PC-9 (cell line): ENCODE measurements at regions of chr22 and their contacts with region 1.

Region 1: DNA sequence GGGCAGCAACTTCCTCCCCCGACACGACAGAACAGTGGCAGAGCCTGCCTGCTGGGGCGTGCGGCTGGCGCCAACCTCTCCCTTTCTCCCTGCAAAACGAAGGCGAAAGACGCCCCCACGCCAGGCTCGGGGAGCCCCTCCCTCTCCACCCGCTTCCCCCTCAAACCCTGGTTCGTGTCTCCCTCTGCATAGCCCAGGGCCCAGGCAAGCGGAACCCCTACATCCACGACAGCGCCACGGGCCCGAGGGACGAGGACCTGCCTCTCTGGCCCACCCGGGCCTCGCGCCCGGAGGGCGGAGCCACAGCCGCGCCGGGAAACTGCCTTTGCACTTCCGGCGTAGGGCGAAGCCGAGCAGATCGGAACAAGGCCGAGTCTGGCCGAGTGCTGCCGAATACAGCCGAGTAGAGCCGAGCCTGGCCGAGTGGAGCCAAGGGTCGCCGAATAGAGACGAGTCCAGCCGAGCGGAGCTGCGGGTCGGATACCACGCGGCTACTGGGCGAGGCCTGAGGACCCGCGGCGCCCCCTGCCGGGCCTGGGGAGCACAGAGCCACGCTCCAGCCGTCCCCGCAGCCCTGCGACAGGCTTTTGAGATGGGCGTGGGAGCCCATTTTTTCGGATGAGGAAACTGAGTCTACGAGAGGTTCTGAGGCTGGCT is 11.2 kb upstream of the C1QTNF6 start:
- DNase-seq: peak; percentile 95 to 100
- H3K4me3 ChIP-seq: peak overlapping the region; percentile 77
- H3K27ac ChIP-seq: peak overlapping the region; percentile 94
- H3K4me1 ChIP-seq: peaks cover 46% of the 10 kb centered on the region
- H3K27me3 ChIP-seq: no peaks in the 10 kb centered on the region
- CTCF ChIP-seq: peak; percentile 91

Region 2: DNA sequence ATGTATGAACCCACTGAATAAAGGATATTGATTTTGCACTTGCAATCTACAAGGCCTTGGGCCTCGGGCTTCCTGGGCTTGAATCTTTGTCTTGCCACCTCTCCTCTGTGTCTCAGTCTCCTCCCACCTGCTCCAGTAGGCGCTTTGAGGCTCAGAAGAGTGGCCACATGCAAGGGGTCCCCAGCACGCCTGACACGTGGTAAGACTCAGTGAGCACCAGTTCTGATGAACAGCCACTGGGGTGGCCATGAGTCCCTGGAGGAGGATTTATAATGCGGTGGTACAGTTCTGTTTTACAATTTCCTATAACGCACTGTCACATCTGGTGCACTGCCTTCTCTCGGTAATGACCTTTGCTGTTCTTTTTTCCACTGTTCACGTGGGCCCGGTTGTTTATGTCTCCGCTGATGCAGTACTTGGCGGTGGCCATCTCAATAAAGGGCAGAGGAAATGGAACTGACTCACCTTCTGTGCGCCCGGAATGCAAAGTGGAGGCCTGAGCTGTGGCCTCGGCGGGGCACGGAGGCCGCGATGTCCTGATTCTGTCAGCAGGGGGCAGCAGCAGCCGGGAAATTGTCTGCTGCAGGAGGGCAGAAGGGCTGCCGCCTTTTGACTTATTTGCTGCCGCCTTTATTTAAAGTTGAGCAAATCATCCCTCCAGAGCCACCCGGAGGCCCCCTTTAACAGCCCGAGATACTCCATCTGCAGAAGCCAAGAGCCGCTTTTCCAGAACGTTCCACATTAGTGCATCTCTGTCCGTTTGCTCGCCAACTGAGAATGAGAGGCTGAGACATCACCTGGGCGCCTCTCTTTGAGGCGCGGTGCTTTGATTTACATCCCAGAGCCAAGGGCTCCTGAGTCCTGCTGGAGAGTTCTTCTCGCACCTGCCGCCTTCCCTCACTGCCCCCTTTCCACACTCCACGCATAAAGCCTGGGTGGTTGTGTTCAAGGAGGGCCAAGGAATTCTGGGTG is 417.3 kb before region 1 on chr22:
- CTCF ChIA-PET with region 1: no interaction called
- POLR2A ChIA-PET with region 1: no interaction called
- intact Hi-C with region 1: loop called (anchors 1 kb)
- DNase-seq: peak; percentile 80 to 93
- H3K4me3 ChIP-seq: no peak overlapping the region
- H3K27ac ChIP-seq: no peak overlapping the region
- H3K4me1 ChIP-seq: peaks cover 5% of the 10 kb centered on the region
- H3K27me3 ChIP-seq: peaks cover 9% of the 10 kb centered on the region
- CTCF ChIP-seq: peak; percentile 99

Region 3: GRCh38 chr22:36946421-36947158 is 252.6 kb before region 1 on chr22:
- CTCF ChIA-PET with region 1: no interaction called
- POLR2A ChIA-PET with region 1: no interaction called
- intact Hi-C with region 1: no loop called
- DNase-seq: no peak
- H3K4me3 ChIP-seq: no peak overlapping the region
- H3K27ac ChIP-seq: no peak overlapping the region
- H3K4me1 ChIP-seq: no peaks in the 10 kb centered on the region
- H3K27me3 ChIP-seq: no peaks in the 10 kb centered on the region; the same call in 1 of the 2 replicates
- CTCF ChIP-seq: 0 out of 2 replicates have a peak, but pooled peaks have one; percentile 25

Region 4: DNA sequence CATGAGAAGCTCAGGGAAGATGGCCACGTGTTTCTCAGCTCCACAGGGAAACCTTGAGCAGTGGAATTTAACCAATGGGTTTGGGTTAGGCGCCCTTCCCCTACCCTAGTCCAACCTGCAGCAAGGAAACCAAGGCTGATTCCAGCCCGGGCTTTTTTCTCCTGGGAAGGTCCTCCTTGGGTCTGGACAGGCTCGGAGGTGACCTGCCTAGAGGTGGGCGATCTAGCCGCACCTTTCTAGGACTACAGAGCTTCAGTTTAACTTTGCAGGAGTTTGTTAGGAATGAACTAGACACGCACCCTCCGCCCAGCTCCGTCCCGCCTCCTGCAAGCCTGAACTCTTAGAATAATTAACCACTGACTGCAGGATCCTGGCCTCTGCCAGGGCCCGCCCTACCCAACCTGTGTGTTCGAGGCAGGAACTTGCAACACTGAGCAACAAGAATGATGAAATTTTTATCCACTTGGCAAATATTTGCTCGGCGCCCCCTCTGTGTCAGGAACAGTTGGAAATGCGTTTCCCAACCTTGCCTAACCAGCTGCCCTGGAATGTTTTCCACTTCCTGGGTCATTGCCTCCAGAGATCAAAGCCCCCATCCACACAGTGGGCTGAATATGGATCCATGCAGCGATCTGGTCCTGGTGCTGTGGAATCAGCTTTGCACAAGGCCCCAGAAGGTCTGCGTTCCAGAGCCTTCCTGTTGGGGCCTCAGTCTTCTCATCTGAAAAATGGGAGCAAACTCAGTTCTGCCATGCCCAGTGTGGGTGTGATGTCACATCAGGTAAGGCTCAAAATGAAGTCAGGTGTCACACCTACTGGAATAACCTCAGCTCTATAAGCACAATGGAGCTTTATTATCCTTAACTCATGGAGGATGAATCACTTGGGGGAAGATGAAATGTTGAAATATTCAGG is 166.4 kb before region 1 on chr22:
- CTCF ChIA-PET with region 1: interaction called, 4 read pairs
- POLR2A ChIA-PET with region 1: no interaction called
- intact Hi-C with region 1: loop called (anchors 5 kb)
- DNase-seq: peak; percentile 81 to 98
- H3K4me3 ChIP-seq: peak overlapping the region; percentile 50
- H3K27ac ChIP-seq: peak overlapping the region; percentile 86
- H3K4me1 ChIP-seq: peaks cover 40% of the 10 kb centered on the region
- H3K27me3 ChIP-seq: no peaks in the 10 kb centered on the region
- CTCF ChIP-seq: no peak

Region 5: GRCh38 chr22:37088108-37088605 is 111.1 kb before region 1 on chr22:
- CTCF ChIA-PET with region 1: interaction called, 13 read pairs
- POLR2A ChIA-PET with region 1: interaction called, 5 read pairs
- intact Hi-C with region 1: no loop called
- DNase-seq: peak; percentile 54 to 79
- H3K4me3 ChIP-seq: no peak overlapping the region
- H3K27ac ChIP-seq: no peak overlapping the region
- H3K4me1 ChIP-seq: 0 out of 2 replicates have a peak, but pooled peaks cover 7% of the 10 kb centered on the region
- H3K27me3 ChIP-seq: peaks cover 16% of the 10 kb centered on the region
- CTCF ChIP-seq: no peak

Region 6: DNA sequence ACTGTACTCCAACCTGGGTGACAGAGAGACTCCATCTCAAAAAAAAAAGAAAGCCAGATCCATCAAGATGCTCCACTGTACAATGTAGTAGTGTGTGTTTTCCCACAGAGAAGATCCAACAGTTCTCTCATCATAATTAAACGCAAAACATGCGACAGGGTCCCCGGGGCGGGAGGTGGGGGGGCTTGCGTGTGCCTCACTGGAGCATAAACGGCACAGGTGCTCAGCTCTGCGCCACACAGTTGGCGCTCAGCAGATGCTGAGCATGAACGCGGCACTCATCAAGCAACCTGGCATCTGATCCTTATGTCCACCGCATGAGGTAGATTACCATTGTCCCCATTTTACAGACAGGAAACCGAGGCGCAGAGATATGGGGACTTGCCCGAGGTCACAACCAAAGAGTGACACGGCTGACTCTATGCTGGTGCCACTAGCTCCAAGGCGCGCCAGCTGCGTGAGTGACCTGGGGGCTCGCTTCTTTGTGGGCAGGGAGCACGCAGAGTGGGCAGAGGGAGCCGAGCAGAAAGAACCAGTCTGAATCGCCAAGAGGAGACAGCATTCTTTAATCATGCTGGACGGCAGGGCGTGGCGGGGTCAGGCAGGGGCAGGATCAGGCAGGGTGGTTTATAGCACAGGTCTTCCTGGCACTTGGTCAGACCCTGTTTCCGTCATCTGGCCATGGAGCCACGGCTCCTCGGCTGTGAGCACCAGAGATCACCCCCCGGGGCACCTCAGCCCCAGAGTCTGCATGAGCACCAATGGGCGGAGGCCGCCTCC is 19.4 kb before region 1 on chr22:
- CTCF ChIA-PET with region 1: interaction called, 3 read pairs
- POLR2A ChIA-PET with region 1: interaction called, 6 read pairs
- intact Hi-C with region 1: loop called (anchors 1 kb)
- DNase-seq: peak; percentile 59 to 92
- H3K4me3 ChIP-seq: no peak overlapping the region
- H3K27ac ChIP-seq: no peak overlapping the region
- H3K4me1 ChIP-seq: peaks cover 17% of the 10 kb centered on the region
- H3K27me3 ChIP-seq: no peaks in the 10 kb centered on the region
- CTCF ChIP-seq: no peak

Region 7: DNA sequence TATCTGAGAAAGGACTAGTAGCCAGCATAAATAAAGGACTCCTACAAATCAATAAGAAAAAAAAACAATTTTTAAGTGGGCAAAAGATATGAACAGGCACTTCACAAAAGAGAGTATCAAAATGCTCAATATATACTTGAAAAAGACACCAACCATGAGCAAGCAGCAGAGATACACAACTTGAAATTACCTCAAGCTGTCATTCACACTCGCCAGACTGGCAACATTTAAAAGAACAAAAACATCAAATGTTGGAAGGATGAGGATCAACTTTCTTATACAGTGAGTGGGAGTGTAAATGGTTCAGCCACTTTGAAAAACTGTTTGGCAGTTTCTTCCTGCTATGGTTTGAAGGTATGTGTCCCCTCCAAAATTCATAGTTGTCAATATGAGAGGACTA is 252.0 kb after region 1 on chr22:
- CTCF ChIA-PET with region 1: interaction called, 11 read pairs
- POLR2A ChIA-PET with region 1: no interaction called
- intact Hi-C with region 1: loop called (anchors 10 kb)
- DNase-seq: no peak
- H3K4me3 ChIP-seq: no peak overlapping the region
- H3K27ac ChIP-seq: no peak overlapping the region
- H3K4me1 ChIP-seq: peaks cover 21% of the 10 kb centered on the region
- H3K27me3 ChIP-seq: no peaks in the 10 kb centered on the region
- CTCF ChIP-seq: no peak